Endothelial cell of umbilical vein (primary cell): ENCODE measurements at regions of chr19 and their contacts with region 1.

Region 1: GRCh38 chr19:40221858-40222837 is 4.0 kb upstream of the TTC9B start:
- DNase-seq: peak; percentile 91
- H3K4me3 ChIP-seq: no peak overlapping the region
- H3K27ac ChIP-seq: no peak overlapping the region
- H3K4me1 ChIP-seq: peaks cover 11% of the 10 kb centered on the region
- H3K27me3 ChIP-seq: peaks cover 22 to 30% of the 10 kb centered on the region in 2 experiments
- CTCF ChIP-seq: peak; percentile 73 to 88
- POLR2A ChIP-seq: no peak

Region 2: GRCh38 chr19:40119380-40119779 is 102.8 kb before region 1 on chr19:
- CTCF ChIA-PET with region 1: no interaction called
- POLR2A ChIA-PET with region 1: no interaction called
- dilution Hi-C with region 1: no loop called
- intact Hi-C with region 1: no loop called
- DNase-seq: no peak
- H3K4me3 ChIP-seq: no peak overlapping the region
- H3K27ac ChIP-seq: no peak overlapping the region
- H3K4me1 ChIP-seq: no peaks in the 10 kb centered on the region
- H3K27me3 ChIP-seq: no peaks in the 10 kb centered on the region
- CTCF ChIP-seq: no peak
- POLR2A ChIP-seq: no peak

Region 3: DNA sequence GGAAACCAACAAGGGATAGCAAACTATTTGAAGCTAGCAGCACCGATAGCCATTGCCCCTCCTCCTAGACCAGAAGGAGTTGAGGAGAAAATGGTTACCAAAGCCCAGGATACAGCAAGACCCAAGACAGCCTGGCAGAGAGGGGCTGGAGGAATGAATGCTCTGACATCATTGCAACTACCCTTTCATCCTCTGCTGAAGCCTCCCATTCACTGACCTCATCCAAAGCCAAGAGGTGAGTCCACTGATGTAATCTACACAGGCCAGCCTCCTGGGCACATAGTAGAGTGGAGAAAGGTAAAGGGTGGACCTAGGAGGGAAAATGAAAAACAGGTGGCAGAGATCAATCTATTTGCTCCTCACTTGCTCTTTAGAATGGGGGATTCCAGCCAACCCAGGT is 88.7 kb before region 1 on chr19:
- CTCF ChIA-PET with region 1: no interaction called
- POLR2A ChIA-PET with region 1: no interaction called
- dilution Hi-C with region 1: no loop called
- intact Hi-C with region 1: no loop called
- DNase-seq: no peak
- H3K4me3 ChIP-seq: no peak overlapping the region
- H3K27ac ChIP-seq: no peak overlapping the region
- H3K4me1 ChIP-seq: no peaks in the 10 kb centered on the region
- H3K27me3 ChIP-seq: peaks cover 8 to 9% of the 10 kb centered on the region in 2 experiments
- CTCF ChIP-seq: no peak
- POLR2A ChIP-seq: no peak

Region 4: DNA sequence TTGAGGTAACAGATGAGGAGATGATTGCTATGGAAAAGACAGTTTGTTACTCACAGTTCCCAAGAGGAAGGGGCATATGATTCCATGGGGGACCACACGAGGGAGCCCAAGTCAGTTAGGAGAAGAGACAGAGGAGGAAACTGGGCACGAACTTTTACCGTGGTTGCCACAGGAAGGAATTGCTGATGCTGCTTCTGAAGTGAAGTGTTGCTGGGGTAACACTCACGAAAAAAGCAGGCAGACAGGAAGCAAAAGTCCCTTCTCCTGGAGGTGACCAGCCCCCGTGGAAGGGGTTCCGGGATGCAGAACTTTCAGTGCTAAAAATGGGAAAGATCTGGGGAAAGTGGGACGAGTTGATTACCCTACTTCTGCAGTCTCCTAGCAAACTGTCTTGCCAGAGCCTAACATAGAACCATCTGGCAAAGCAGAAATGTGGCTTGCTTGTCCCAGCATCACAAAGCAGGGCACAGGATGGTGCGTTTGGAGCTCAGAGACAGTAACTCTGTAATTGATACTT is 66.3 kb before region 1 on chr19:
- CTCF ChIA-PET with region 1: no interaction called
- POLR2A ChIA-PET with region 1: no interaction called
- dilution Hi-C with region 1: no loop called
- intact Hi-C with region 1: loop called (anchors 5 kb)
- DNase-seq: peak; percentile 17
- H3K4me3 ChIP-seq: no peak overlapping the region
- H3K27ac ChIP-seq: no peak overlapping the region
- H3K4me1 ChIP-seq: no peaks in the 10 kb centered on the region
- H3K27me3 ChIP-seq: no peaks in the 10 kb centered on the region
- CTCF ChIP-seq: peak; percentile 23 to 44
- POLR2A ChIP-seq: no peak

Region 5: GRCh38 chr19:40190891-40191835 is 31.0 kb before region 1 on chr19 and contains the start of gene MAP3K10:
- CTCF ChIA-PET with region 1: interaction called, 3 read pairs
- POLR2A ChIA-PET with region 1: no interaction called
- dilution Hi-C with region 1: no loop called
- intact Hi-C with region 1: loop called (anchors 1 kb)
- DNase-seq: peak; percentile 61
- H3K4me3 ChIP-seq: peak within 1 kb of the TSS; percentile 68 to 86 (median 83)
- H3K27ac ChIP-seq: peak within 1 kb of the TSS; percentile 73
- H3K4me1 ChIP-seq: peaks cover 2% of the 10 kb centered on the region
- H3K27me3 ChIP-seq: no peaks in the 10 kb centered on the region
- CTCF ChIP-seq: no peak
- POLR2A ChIP-seq: peak; percentile 13
- total RNA-seq, gene MAP3K10: 16.5 and 19.4 TPM in 2 replicates

Region 6: DNA sequence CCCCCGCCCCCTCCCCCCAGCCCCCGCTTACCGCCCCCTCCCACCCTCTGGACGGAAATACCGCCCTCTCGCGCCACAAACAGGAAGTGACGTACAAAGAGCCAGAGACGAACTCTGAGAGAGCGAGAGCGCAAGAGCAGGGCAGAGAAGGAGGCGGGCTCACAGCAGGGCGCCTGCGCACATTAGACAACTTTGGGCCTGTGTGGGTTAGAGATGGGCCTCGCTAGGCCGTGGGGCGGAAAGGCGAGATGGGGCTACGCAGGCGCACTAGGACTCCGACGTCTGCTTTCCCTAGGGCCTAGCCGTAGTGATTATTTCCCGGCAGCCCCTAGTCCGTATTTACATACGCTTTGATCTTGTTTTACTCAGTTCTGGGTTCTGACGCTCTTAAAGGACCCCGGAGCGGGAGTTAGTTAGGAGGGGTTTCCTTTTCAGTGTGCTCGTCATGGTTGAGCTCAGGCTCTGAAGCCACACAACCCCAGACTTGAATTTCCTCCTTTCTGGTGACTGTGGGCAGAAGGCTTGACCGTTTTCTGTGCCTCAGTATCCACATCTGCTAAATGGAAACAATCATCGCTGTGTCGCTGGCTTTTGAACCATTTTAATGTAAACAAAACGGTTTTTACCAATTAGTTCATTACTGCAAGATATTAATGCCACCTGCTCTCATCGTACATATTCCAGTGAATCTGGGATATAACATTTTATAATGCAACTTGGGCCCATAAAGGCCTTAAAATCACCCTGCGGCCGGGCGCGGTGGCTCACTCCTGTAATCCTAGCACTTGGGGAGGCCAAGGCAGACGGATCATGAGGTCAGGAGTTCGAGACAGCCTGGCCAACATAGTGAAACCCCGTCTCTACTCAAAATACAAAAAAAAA is 63.4 kb after region 1 on chr19:
- CTCF ChIA-PET with region 1: no interaction called
- POLR2A ChIA-PET with region 1: no interaction called
- dilution Hi-C with region 1: no loop called
- intact Hi-C with region 1: no loop called
- DNase-seq: peak; percentile 100
- H3K4me3 ChIP-seq: peak overlapping the region in 2 of 3 experiments; percentile 40 to 86
- H3K27ac ChIP-seq: peak overlapping the region; percentile 76
- H3K4me1 ChIP-seq: peaks cover 11% of the 10 kb centered on the region
- H3K27me3 ChIP-seq: no peaks in the 10 kb centered on the region
- CTCF ChIP-seq: no peak
- POLR2A ChIP-seq: peak; percentile 43

Region 7: GRCh38 chr19:40549007-40549708 is 327.0 kb after region 1 on chr19:
- CTCF ChIA-PET with region 1: no interaction called
- POLR2A ChIA-PET with region 1: no interaction called
- dilution Hi-C with region 1: no loop called
- intact Hi-C with region 1: no loop called
- DNase-seq: peak; percentile 42
- H3K4me3 ChIP-seq: no peak overlapping the region
- H3K27ac ChIP-seq: no peak overlapping the region
- H3K4me1 ChIP-seq: no peaks in the 10 kb centered on the region
- H3K27me3 ChIP-seq: peaks cover 14 to 16% of the 10 kb centered on the region in 2 experiments
- CTCF ChIP-seq: peak; percentile 7 to 67
- POLR2A ChIP-seq: no peak